ENCODE measurements at regions of chr7 and their contacts with region 1.

Region 1: GRCh38 chr7:101287032-101287431 is 34.6 kb downstream of the IFT22 start:
- DNase-seq: no peak
- H3K4me3 Mint-ChIP-seq: no peak overlapping the region
- H3K27ac Mint-ChIP-seq: no peak overlapping the region
- H3K4me1 Mint-ChIP-seq: peaks cover 6% of the 10 kb centered on the region
- H3K27me3 Mint-ChIP-seq: peaks cover 5% of the 10 kb centered on the region

Region 2: DNA sequence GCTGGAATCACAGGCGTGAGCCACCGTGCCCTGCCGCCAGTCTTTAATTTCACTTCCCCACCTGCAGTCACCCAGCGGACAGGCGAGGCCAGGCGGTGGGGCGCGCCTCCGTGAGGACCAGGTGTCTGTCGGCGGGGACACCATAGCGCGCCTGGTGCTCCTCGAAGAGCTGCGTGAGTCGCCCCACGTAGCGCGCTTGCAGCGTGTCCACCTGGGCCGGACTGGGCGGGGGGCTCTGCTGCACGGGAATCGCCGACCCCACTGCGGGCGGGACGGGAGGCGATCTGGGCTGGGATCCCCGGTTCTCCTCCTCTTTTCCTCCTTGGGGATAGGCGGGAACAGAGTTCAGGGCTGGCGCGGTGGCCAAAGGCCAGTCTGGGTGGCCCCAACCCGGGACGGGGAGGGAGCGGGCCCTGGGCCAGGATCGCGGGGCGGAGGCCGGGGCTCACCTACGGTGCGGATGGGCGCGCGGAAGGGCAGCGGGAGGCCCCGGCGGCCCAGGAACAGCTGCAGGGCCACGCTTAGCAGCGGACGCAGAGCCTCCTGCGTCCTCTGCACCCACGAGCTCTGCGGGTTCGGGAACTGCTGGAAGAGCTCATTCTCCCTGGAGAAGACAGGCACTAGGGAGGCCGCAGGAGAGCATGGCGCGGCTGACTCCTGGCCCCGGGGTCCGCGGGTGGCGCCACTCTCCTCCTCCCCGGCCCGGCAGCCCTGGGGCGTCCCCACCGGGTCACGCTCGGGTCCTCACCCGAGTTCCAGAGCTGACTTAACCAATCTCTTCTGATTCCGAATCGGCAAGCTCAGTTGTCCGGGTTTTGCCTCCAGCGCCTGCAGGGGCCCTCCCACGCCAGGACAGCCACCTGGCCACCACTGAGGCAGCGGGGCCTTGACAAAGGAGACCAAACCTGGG is 85.1 kb before region 1 on chr7:
- CTCF ChIA-PET with region 1: interaction called, 4 read pairs
- intact Hi-C with region 1: loop called (anchors 5 kb)
- DNase-seq: no peak
- H3K4me3 Mint-ChIP-seq: no peak overlapping the region
- H3K27ac Mint-ChIP-seq: no peak overlapping the region
- H3K4me1 Mint-ChIP-seq: peaks cover 14% of the 10 kb centered on the region
- H3K27me3 Mint-ChIP-seq: peaks cover 21% of the 10 kb centered on the region

Measured in activated naive CD4-positive, alpha-beta T cell treated with anti-CD3 and anti-CD28 coated beads for 36 hours (primary cell).